ENCODE measurements at regions of chr13 and their contacts with region 1.

Region 1: DNA sequence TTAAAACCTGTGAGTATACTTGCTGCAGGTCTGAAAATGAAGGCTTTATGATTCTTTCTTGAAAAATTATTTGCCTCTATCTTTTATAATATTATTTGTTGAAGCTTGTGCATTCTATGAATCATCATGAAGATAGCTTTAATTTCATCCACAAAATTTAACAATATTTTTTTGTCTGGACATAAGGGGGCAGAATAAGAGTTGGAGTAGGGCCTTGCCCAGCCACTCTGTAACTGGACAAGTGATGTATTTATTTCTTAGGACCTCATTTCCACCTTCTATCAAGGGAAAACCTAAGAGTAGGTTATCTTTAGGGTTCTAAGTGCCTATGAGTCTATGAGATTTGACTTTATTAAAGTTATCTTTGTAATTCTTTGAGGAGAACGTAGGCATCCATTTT is 49.9 kb downstream of the N4BP2L1 start:
- DNase-seq: no peak
- ATAC-seq: no peak
- H3K4me3 ChIP-seq: no peak overlapping the region
- H3K27ac ChIP-seq: no peak overlapping the region
- H3K4me1 ChIP-seq: no peaks in the 10 kb centered on the region
- H3K27me3 ChIP-seq: no peaks in the 10 kb centered on the region
- CTCF ChIP-seq: no peak; the same call in 1 of the 2 replicates

Region 2: DNA sequence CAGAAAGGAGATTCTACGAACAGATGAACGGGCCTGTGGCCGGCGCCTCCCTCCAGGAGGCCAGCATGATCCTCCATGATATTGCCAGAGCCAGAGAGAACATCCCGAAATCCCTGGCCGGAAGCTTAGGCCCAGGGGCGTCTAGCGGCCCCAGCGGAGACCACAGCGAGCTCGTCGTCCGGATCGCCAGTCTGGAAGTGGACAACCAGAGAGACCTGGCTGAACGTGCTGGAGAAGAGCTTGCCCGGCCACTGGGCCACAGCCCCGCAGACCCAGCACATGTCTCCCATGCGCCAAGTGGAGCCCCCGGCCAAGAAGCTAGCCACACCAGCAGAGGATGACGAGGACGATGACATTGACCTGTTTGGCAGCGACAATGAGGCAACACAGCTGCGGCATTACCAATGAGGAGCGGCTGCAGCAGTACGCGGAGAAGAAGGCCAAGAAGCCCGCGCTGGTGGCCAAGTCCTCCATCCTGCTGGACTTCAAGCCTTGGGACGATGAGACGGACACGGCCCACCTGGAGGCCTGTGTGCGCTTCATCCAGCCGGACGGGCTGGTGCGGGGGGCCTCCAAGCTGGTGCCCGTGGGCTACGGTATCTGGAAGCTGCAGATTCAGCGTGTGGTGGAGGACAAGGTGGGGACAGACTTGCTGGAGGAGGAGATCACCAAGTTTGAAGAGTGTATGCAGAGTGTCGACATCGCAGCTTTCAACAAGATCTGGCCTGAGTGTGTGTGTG is 425.2 kb before region 1 on chr13:
- CTCF ChIA-PET with region 1: no interaction called
- POLR2A ChIA-PET with region 1: interaction called, 12 read pairs
- in situ Hi-C with region 1: no loop called
- intact Hi-C with region 1: no loop called
- DNase-seq: no peak
- ATAC-seq: no peak
- H3K4me3 ChIP-seq: no peak overlapping the region
- H3K27ac ChIP-seq: no peak overlapping the region
- H3K4me1 ChIP-seq: no peaks in the 10 kb centered on the region
- H3K27me3 ChIP-seq: no peaks in the 10 kb centered on the region
- CTCF ChIP-seq: no peak